Right lobe of liver (tissue), 6 donors: ENCODE measurements at regions of chr5 and their contacts with region 1.

Region 1: DNA sequence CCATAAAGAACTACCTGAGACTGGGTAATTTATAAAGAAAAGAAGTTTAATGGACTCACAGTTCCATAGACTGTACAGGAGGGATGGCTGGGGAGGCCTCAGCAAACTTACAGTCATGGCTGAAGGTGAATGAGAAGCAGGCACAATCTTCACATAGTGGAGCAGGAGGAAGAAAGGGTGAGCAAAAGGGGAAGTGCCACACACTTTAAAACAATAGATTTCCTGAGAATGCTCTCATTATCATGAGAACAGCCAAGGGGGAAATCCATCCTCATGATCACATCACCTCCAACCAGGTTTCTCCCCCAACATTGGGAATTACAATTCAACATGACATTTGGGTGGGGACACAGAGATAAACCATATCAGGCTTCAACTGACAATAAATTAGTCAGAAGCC is 664.9 kb downstream of the TAF11L14 start:
- DNase-seq: no peak
- ATAC-seq: no peak
- H3K4me3 ChIP-seq: no peak overlapping the region
- H3K27ac ChIP-seq: no peak overlapping the region
- H3K4me1 ChIP-seq: no peaks in the 10 kb centered on the region
- H3K27me3 ChIP-seq: no peaks in the 10 kb centered on the region
- CTCF ChIP-seq: no peak
- POLR2A ChIP-seq: no peak

Region 2: GRCh38 chr5:17216176-17216973 is 1082.8 kb before region 1 on chr5:
- intact Hi-C with region 1: loop called (anchors 10 kb)
- DNase-seq: peak; percentile 81 to 87 (median 87)
- ATAC-seq: peak; percentile 77 to 86 (median 80)
- H3K4me3 ChIP-seq: peak overlapping the region in 1 of 3 donors; percentile 16
- H3K27ac ChIP-seq: no peak overlapping the region
- H3K4me1 ChIP-seq: no peaks in the 10 kb centered on the region
- H3K27me3 ChIP-seq: no peaks in the 10 kb centered on the region
- CTCF ChIP-seq: peak; percentile 60 to 85 (median 78)
- POLR2A ChIP-seq: no peak

Region 3: GRCh38 chr5:17228821-17229291 is 1070.3 kb before region 1 on chr5:
- intact Hi-C with region 1: loop called in 1 of 2 experiments (anchors 10 kb)
- DNase-seq: no peak
- ATAC-seq: peak in 2 of 4 donors; percentile 20 to 30
- H3K4me3 ChIP-seq: no peak overlapping the region
- H3K27ac ChIP-seq: no peak overlapping the region
- H3K4me1 ChIP-seq: no peaks in the 10 kb centered on the region
- H3K27me3 ChIP-seq: no peaks in the 10 kb centered on the region
- CTCF ChIP-seq: no peak
- POLR2A ChIP-seq: no peak

Region 4: DNA sequence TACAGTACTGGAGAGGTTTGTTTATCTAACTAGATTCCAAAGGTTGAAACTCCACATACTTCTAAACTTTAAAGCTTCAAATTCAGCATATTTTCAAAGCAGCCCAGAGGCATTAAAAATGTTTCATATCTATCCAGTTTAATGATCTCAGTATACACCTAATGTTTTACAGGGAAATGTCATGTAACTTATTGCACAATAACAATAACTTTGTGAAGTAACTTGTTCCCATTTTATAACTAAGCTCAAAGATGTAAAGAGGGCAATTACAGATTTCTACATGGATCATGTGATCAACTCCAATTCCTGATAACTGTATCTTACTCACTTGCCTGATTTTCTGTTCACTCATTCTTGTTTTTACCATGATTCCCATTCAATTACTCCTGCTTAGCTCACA is 54.9 kb before region 1 on chr5:
- intact Hi-C with region 1: no loop called
- DNase-seq: no peak
- ATAC-seq: no peak
- H3K4me3 ChIP-seq: no peak overlapping the region
- H3K27ac ChIP-seq: no peak overlapping the region
- H3K4me1 ChIP-seq: no peaks in the 10 kb centered on the region
- H3K27me3 ChIP-seq: no peaks in the 10 kb centered on the region
- CTCF ChIP-seq: no peak
- POLR2A ChIP-seq: no peak